Activated CD4-positive, alpha-beta T cell treated with anti-CD3 and anti-CD28 coated beads, Interleukin-2, amount 10 ng/mL, durations not matched to agents 7 days and 5 days (primary cell): ENCODE measurements at regions of chr16 and their contacts with region 1.

Region 1: GRCh38 chr16:84186685-84187437 is at the start of gene TAF1C:
- DNase-seq: peak; percentile 89
- H3K4me3 Mint-ChIP-seq: peak within 1 kb of the TSS; percentile 91
- H3K27ac Mint-ChIP-seq: peak within 1 kb of the TSS; percentile 92
- H3K4me1 Mint-ChIP-seq: peaks cover 22% of the 10 kb centered on the region
- H3K27me3 Mint-ChIP-seq: no peaks in the 10 kb centered on the region
- total RNA-seq, gene TAF1C: 52.1 to 60.8 TPM

Region 2: DNA sequence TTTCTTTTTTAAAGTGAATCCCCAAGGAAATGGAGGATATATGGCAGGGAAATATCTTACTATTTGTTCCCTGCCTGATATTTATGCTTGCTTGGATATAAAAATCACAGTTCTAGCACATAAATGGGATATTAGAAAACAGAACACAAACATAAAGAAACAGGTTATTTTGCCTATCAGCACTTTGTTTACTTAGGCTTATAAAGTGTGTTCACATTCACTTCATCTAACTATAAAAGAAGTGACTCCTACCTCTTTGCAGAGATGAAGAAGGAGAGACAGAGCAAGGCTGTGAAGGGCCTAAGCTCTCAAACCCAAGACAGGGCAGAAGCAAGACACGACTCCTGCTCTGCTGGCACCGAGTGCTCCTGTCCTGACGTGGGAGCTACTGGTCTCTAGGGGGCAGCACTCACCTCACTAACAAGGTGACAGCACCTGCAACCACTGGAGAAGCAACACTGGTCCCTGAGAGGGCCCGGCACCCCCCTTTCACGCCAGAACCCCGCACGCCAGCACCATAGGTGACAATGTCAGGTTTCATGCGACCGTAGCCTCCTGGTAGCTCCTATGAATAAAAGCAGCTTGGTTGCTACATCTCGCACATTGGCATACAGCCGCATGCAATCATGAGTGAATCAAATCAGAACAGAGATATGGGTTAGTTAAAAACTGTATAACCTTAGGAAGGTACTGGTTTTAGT is 102.1 kb before region 1 on chr16:
- CTCF ChIA-PET with region 1: interaction called, 26 read pairs
- POLR2A ChIA-PET with region 1: interaction called, 3 read pairs
- DNase-seq: peak; percentile 83
- H3K4me3 Mint-ChIP-seq: no peak overlapping the region
- H3K27ac Mint-ChIP-seq: no peak overlapping the region
- H3K4me1 Mint-ChIP-seq: peaks cover 45% of the 10 kb centered on the region
- H3K27me3 Mint-ChIP-seq: no peaks in the 10 kb centered on the region

Region 3: DNA sequence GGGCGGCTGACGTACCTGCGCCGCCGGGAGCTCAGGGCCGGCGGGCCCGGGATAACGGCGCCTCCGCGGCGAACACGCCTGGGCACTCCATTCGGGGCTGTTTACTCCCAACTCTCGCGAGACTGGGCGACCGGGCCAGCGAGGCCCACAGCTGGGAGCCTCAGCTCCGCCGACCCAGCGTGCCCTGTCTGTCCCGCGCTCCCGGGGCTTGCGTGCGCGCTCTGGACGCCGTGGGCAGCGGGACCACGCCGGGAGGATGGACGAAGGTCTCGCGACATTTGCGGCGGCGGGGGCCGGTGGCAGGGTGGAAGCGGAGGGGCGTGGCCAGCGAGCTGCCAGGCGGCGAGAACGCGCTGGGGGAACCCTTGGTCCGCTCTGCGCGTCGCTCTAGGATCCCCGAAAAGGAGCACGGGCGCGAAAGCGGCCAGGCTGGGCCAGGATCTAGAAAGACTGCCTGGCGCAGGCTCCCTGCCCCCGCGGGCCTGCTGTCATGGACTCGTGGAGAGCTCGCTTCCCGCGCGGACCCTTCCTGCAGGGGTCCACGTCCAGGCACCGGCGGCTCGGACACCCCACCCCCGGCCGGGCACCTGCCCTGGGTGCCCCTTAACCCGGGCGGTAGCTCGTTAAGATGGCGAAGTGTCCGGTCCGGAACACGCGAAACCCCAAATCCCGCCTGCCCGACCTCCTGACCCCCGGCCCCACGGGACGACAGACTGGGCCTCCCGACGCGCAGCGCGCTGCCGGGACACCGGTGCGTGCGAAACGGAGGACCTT is 70.0 kb before region 1 on chr16 and contains the start of gene MBTPS1:
- CTCF ChIA-PET with region 1: interaction called, 10 read pairs
- POLR2A ChIA-PET with region 1: no interaction called
- DNase-seq: peak; percentile 97
- H3K4me3 Mint-ChIP-seq: peak within 1 kb of the TSS; percentile 90
- H3K27ac Mint-ChIP-seq: peak within 1 kb of the TSS; percentile 96
- H3K4me1 Mint-ChIP-seq: peaks cover 24% of the 10 kb centered on the region
- H3K27me3 Mint-ChIP-seq: no peaks in the 10 kb centered on the region
- total RNA-seq, gene MBTPS1: 57.3 to 61.9 TPM

Region 4: GRCh38 chr16:84144859-84145639 is 41.8 kb before region 1 on chr16 and contains the starts of genes DNAAF1 and HSDL1:
- CTCF ChIA-PET with region 1: interaction called, 12 read pairs
- POLR2A ChIA-PET with region 1: no interaction called
- DNase-seq: peak; percentile 92
- H3K4me3 Mint-ChIP-seq: peak within 1 kb of the TSS; percentile 96
- H3K27ac Mint-ChIP-seq: peak within 1 kb of the TSS; percentile 80
- H3K4me1 Mint-ChIP-seq: peaks cover 15% of the 10 kb centered on the region
- H3K27me3 Mint-ChIP-seq: peaks cover 6% of the 10 kb centered on the region
- total RNA-seq, gene DNAAF1: 0.25 TPM in 1 of 2 experiments, not detected in the other
- total RNA-seq, gene HSDL1: 8.8 to 10.6 TPM

Region 5: DNA sequence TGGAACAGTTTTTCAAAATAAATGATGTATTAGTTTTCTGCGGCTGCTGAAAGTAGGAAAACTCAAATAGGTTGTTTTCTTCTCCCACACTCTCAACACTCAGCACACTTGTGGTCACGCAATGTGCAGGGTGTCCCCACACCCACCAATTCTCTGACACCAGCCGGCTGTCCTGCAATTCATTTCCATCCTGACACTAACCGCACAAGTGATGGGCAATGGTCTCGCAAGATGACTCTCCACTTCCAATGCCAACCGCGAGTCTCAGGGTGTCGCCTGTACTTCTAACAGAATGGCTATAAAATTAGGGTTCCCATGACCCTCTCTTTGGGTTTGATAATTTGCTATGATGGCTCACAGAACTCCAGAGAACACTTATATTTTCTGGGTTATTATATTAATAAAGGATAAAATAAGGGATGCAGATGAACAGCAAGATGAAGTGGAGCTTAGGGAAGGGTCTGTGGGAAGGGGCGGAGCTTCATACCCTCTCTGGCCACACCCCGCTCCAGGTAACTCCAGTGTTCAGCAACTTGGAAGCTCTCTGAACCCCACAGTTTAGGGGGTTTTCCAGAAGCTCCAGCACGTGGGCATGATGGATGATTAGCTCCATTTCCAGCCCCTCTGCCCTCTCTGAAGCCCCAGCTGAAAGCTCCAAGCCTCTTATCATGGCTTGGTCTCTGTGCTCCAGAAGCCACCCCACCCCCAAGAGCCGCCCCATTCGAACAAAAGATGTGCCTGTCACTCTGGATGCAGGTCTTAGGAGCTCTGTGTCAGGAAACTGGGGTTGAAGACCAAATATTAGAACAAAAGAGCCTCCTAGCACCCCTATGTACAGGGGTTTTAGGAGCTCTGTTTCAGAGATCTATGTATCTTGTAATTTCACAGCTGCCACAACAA is 19.8 kb before region 1 on chr16:
- CTCF ChIA-PET with region 1: interaction called, 13 read pairs
- POLR2A ChIA-PET with region 1: no interaction called
- DNase-seq: no peak
- H3K4me3 Mint-ChIP-seq: no peak overlapping the region
- H3K27ac Mint-ChIP-seq: no peak overlapping the region
- H3K4me1 Mint-ChIP-seq: no peaks in the 10 kb centered on the region
- H3K27me3 Mint-ChIP-seq: peaks cover 26% of the 10 kb centered on the region

Region 6: DNA sequence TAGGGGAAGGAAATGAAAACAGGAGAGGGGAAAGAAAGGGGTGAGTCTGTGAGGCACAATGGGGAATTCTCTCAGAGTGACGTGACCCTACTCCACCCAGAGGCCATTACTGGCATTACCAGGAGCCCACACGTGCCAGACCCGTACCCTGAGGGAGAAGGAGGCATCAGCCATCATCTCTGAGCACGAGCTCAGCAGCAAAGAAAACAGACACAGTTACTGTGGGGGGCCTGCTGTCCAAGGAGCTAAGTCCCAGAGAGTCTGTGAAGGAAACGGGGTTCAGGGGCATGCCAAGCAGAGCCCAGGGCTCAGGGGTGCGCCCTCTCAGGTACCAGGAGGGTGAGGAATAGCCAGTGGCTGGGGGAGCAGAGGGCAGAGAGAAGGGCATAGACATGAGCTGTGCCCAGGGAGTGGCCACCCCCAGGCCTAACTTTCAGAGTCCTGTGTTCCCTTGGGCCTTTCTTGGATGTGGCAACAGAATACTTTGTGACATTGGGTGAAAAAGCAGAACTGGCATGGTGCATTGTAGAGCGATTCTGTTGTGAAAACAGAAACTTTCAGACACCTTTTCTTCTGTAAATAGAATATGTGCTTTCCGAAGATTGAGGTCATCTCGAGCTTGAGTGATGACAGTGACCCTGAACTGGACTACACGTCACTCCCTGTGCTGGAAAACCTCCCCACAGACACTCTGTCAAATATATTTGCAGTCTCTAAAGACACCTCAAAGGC is 11.3 kb before region 1 on chr16:
- CTCF ChIA-PET with region 1: interaction called, 39 read pairs
- POLR2A ChIA-PET with region 1: no interaction called
- DNase-seq: peak; percentile 73
- H3K4me3 Mint-ChIP-seq: no peak overlapping the region
- H3K27ac Mint-ChIP-seq: no peak overlapping the region
- H3K4me1 Mint-ChIP-seq: peaks cover 5% of the 10 kb centered on the region
- H3K27me3 Mint-ChIP-seq: peaks cover 3% of the 10 kb centered on the region